Heart right ventricle (tissue), 16 donors: ENCODE measurements at regions of chrX and their contacts with region 1.

Region 1: GRCh38 chrX:103356130-103356798 is at the start of gene TCEAL9:
- DNase-seq: peak; percentile 28 to 78
- ATAC-seq: peak; percentile 85 to 98 (median 97)
- H3K4me3 ChIP-seq: peak within 1 kb of the TSS; percentile 51 to 84 (median 72)
- H3K27ac ChIP-seq: peak within 1 kb of the TSS; percentile 70 to 92 (median 86)
- H3K4me1 ChIP-seq: peaks cover 0 to 10% (median 0%) of the 10 kb centered on the region in 9 donors
- H3K27me3 ChIP-seq: peaks cover 0 to 30% (median 0%) of the 10 kb centered on the region in 7 donors
- CTCF ChIP-seq: no peak
- total RNA-seq, gene TCEAL9: 14.8 to 46.0 (median 23.1) TPM

Region 2: DNA sequence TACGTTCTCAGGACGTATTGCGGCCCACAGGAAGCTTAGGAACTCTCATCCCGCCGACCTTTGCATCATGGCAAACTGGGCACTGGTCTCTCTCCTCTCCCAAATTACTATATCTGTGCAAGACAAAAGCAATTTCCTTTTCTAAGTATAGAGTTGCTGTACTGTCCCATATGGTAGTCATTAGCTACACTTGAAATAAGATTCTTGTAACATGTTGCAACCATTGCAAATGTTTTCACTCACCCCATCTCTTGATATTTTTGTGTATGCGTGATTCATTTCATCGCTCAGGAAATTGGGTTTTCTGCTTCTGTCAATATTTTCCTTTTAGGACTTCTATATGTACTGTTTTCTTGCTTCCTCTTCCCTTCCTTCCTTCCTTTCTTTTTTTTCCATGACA is 1754.2 kb before region 1 on chrX:
- intact Hi-C with region 1: loop called in 1 of 10 experiments (anchors 10 kb)
- DNase-seq: no peak
- ATAC-seq: no peak
- H3K4me3 ChIP-seq: no peak overlapping the region
- H3K27ac ChIP-seq: no peak overlapping the region
- H3K4me1 ChIP-seq: no peaks in the 10 kb centered on the region
- H3K27me3 ChIP-seq: peaks cover 0 to 18% (median 0%) of the 10 kb centered on the region in 7 donors
- CTCF ChIP-seq: no peak

Region 3: DNA sequence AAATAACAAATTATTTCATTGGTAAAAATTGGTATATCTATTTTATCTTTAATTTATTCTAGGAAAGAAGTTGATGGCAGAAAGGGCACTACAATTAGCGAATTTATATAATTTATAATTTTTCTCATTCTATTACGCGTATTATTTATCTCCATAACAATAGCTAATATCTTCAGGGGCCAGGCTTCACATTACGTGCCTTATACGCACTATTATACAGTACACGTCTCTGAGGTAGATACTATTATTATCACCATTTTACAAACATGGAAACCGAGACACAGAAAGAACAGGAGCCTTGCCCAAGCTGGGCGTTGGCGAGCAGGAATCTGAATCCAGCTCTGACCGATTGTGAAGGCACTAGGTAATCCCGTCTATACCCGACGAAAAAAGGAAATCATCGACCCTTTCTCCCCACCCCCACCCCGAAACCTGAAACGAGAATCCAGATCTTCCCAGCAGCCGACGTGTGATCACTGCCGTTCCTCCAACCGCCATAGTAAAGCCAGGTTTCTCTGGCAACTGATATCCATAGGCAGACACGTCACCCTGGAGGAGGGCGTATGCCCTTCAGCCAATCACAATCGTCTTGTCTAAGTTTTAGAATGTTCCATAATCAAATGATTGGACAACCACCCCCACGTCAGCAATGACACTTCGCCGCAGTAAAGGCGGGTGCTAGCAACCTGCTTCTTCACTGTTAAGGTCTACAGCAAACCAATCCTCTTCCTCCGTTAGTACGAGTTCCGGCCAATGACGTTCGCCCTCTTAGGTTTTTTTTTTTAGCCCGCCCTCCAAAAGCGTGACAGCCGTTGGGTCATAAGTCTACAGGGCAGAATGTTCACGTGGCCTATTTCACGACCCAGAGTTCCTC is 330.2 kb after region 1 on chrX and contains the start of gene MORF4L2:
- intact Hi-C with region 1: no loop called
- DNase-seq: peak; percentile 78 to 94
- ATAC-seq: peak; percentile 88 to 96 (median 92)
- H3K4me3 ChIP-seq: peak within 1 kb of the TSS; percentile 44 to 77 (median 65)
- H3K27ac ChIP-seq: peak within 1 kb of the TSS; percentile 76 to 99 (median 95)
- H3K4me1 ChIP-seq: peaks cover 0 to 43% (median 14%) of the 10 kb centered on the region in 9 donors
- H3K27me3 ChIP-seq: peaks cover 0 to 20% (median 0%) of the 10 kb centered on the region in 7 donors
- CTCF ChIP-seq: no peak
- total RNA-seq, gene MORF4L2: 149 to 244 (median 191) TPM